ENCODE measurements at regions of chr1 and their contacts with region 1.

Region 1: GRCh38 chr1:204806943-204807687 is 63.5 kb upstream of the NFASC start:
- DNase-seq: peak; percentile 82 to 86
- ATAC-seq: peak; percentile 92 to 98 (median 94)
- H3K4me3 ChIP-seq: peak overlapping the region; percentile 60
- H3K27ac ChIP-seq: no peak overlapping the region
- H3K4me1 ChIP-seq: no peaks in the 10 kb centered on the region
- H3K27me3 ChIP-seq: no peaks in the 10 kb centered on the region
- CTCF ChIP-seq: peak; percentile 84

Region 2: GRCh38 chr1:204341380-204341779 is 465.7 kb before region 1 on chr1:
- intact Hi-C with region 1: no loop called
- DNase-seq: no peak
- ATAC-seq: no peak
- H3K4me3 ChIP-seq: no peak overlapping the region
- H3K27ac ChIP-seq: no peak overlapping the region
- H3K4me1 ChIP-seq: no peaks in the 10 kb centered on the region
- H3K27me3 ChIP-seq: no peaks in the 10 kb centered on the region
- CTCF ChIP-seq: no peak

Region 3: GRCh38 chr1:204651843-204652421 is 155.2 kb before region 1 on chr1:
- intact Hi-C with region 1: no loop called
- DNase-seq: no peak
- ATAC-seq: no peak
- H3K4me3 ChIP-seq: no peak overlapping the region
- H3K27ac ChIP-seq: no peak overlapping the region
- H3K4me1 ChIP-seq: no peaks in the 10 kb centered on the region
- H3K27me3 ChIP-seq: peaks cover 0 to 3% (median 0%) of the 10 kb centered on the region in 3 donors
- CTCF ChIP-seq: no peak

Region 4: DNA sequence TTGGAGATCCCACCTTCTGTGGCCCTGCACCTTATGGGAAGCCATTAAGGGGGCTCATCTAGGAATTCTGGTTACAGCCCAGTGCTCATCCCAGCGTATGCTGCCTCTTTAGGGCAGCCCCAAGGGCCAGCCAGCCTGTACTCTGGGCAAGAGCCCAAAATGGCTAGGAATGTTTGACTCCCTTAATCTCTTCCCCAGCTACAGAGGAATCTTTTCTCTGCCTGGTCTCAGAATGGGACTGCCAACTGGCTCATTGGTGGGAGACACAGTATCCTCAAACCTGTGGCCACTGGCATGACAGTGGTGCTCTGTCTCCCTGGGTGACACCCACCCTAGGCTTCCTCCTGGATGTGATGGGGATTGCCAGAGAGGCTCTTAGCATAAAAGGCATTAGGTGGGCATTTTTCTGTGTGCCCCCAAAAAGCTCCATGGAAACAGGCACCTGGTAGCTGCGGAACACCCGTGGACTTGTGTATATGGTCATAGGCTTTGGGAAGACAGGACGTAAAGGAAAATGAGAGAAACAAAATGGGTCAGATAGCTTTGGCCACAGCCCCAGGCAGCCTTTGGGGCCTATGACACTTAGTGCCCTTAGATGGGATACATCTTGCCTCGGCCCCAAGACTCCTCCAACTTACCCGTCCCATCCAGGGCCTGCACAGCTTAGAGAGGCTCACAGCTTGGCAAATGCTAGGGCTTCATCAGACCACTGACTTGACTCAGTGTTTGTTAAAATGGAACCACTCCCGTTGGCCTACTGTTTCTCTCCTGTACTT is 270.2 kb after region 1 on chr1:
- intact Hi-C with region 1: loop called in 1 of 2 experiments (anchors 10 kb)
- DNase-seq: no peak
- ATAC-seq: peak; percentile 44 to 51 (median 46)
- H3K4me3 ChIP-seq: no peak overlapping the region
- H3K27ac ChIP-seq: no peak overlapping the region
- H3K4me1 ChIP-seq: peaks cover 13% of the 10 kb centered on the region
- H3K27me3 ChIP-seq: no peaks in the 10 kb centered on the region
- CTCF ChIP-seq: no peak

Measured in psoas muscle (tissue), 8 donors.